A673 (cell line): ENCODE measurements at regions of chrX and their contacts with region 1.

Region 1: GRCh38 chrX:25285598-25285997 is 269.8 kb upstream of the ARX start:
- DNase-seq: peak; percentile 1
- H3K4me3 ChIP-seq: no peak overlapping the region
- H3K27ac ChIP-seq: no peak overlapping the region
- H3K4me1 ChIP-seq: no peaks in the 10 kb centered on the region
- H3K27me3 ChIP-seq: peaks cover 22% of the 10 kb centered on the region
- CTCF ChIP-seq: no peak

Region 2: DNA sequence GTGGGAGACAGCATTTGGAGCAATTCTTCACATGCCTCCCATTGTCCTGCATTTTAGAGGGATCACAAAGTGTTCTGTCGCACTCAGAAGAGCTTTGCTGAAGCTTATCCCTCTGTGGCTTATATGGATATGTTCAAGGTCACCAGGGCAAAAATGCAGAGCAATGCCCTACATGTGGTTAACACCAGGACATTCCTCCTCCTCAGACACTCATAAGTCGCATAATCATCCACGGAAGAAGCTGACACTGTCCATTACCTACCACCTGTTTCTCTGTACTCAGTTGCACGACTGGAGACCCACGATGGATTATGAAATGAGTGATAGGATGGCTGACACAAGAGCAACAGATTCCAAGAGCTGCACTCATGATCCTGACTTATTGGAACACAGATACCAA is 1687.0 kb before region 1 on chrX:
- CTCF ChIA-PET with region 1: no interaction called
- POLR2A ChIA-PET with region 1: no interaction called
- intact Hi-C with region 1: no loop called
- DNase-seq: no peak
- H3K4me3 ChIP-seq: no peak overlapping the region
- H3K27ac ChIP-seq: no peak overlapping the region
- H3K4me1 ChIP-seq: no peaks in the 10 kb centered on the region
- H3K27me3 ChIP-seq: no peaks in the 10 kb centered on the region
- CTCF ChIP-seq: no peak

Region 3: GRCh38 chrX:25015486-25016360 is 269.9 kb before region 1 on chrX and contains the start of gene ARX:
- CTCF ChIA-PET with region 1: no interaction called
- POLR2A ChIA-PET with region 1: no interaction called
- intact Hi-C with region 1: loop called (anchors 10 kb)
- DNase-seq: peak; percentile 91
- H3K4me3 ChIP-seq: peak within 1 kb of the TSS; percentile 59
- H3K27ac ChIP-seq: peak within 1 kb of the TSS; percentile 66
- H3K4me1 ChIP-seq: peaks cover 31% of the 10 kb centered on the region
- H3K27me3 ChIP-seq: no peaks in the 10 kb centered on the region
- CTCF ChIP-seq: no peak
- total RNA-seq, gene ARX: 32.0 and 44.4 TPM in 2 replicates

Region 4: GRCh38 chrX:25519258-25519657 is 233.7 kb after region 1 on chrX:
- CTCF ChIA-PET with region 1: no interaction called
- POLR2A ChIA-PET with region 1: no interaction called
- intact Hi-C with region 1: no loop called
- DNase-seq: no peak
- H3K4me3 ChIP-seq: no peak overlapping the region
- H3K27ac ChIP-seq: no peak overlapping the region
- H3K4me1 ChIP-seq: no peaks in the 10 kb centered on the region
- H3K27me3 ChIP-seq: no peaks in the 10 kb centered on the region
- CTCF ChIP-seq: no peak